ENCODE measurements at regions of chr10 and their contacts with region 1.

Region 1: DNA sequence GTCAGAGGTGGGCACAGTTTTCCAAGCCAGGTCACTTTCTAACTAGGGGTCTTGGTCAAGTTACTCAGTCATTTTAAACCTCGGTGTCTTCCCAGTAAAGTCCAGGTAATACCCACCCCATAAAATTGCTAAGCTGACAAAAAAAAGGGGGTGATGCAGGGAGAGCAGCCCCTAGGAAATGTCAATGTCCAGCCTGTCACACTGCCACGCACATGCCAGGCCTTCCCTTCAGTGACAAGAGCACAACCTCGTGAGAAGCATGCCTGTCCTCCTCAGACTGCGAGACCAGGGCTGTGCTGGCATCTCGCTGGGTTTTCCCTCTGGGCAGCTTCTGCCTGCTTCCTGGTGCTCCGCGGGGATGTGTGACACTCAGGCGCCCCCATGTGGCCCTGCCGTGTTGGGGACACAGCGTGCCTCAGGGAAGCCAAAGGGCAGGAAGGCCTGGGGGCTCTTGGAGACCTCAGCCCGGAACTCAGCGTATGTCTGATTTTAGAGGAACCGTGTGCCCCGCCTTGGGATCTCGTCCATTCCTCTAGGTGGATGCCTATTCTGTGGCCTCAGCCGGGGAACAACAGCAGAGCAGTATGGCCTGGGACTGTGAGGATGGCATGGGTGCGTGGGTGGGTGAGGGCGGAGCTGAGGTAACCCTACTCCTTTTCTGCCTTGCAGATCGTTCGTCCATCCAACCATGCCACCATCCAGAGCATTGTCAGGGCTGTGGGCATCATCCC is 10.2 kb upstream of the GDF2 start:
- DNase-seq: peak; percentile 80
- H3K4me3 ChIP-seq: no peak overlapping the region
- H3K27ac ChIP-seq: no peak overlapping the region
- H3K4me1 ChIP-seq: no peaks in the 10 kb centered on the region
- H3K27me3 ChIP-seq: no peaks in the 10 kb centered on the region
- CTCF ChIP-seq: peak; percentile 86

Region 2: GRCh38 chr10:46266306-46266985 is 1045.7 kb before region 1 on chr10:
- CTCF ChIA-PET with region 1: no interaction called
- POLR2A ChIA-PET with region 1: no interaction called
- intact Hi-C with region 1: no loop called
- DNase-seq: no peak
- H3K4me3 ChIP-seq: no peak overlapping the region
- H3K27ac ChIP-seq: no peak overlapping the region
- H3K4me1 ChIP-seq: no peaks in the 10 kb centered on the region
- H3K27me3 ChIP-seq: no peaks in the 10 kb centered on the region
- CTCF ChIP-seq: no peak

Region 3: DNA sequence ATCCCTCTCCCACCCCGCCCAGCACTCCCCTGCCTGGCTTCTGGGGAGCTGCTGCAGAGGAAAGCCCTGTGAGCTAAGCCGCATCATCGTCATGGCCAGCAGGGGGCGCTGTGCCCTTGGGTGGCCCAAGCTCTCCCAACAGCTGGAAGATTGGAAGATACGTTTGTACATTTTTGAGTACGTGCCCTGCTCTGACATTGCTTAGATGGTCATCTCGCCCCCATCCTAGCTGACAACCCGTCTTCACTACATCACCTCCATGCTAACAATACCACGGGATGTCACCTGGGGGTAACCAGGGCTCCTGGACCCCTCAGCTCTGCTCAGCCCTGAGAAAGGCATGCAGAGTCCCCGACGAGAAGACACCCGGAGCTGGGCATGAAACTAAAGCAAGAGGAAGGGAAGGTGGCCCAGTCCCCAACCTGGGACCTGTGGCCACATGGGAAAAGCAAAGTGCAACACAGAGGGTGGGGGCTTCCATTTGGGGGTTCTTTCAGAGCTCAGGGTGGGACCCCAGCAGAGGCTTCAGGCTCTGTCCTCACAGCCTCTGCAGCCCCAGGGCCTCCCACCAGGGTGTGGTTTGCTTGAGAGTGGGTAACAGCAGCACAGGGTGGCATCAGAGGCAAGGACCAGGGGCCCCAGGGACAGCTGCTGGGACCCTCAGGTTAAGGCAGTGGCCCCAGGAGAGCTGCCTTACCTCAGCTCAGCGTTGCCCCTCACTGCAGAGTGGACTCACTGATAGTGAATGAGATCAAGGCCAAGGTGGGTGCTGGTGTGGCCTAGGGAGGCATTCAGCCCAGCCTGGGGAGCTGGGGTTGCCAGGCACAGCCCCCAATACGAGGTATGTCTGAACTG is 264.2 kb before region 1 on chr10:
- CTCF ChIA-PET with region 1: interaction called, 38 read pairs
- POLR2A ChIA-PET with region 1: no interaction called
- intact Hi-C with region 1: loop called (anchors 1 kb)
- DNase-seq: peak; percentile 76
- H3K4me3 ChIP-seq: no peak overlapping the region
- H3K27ac ChIP-seq: no peak overlapping the region
- H3K4me1 ChIP-seq: no peaks in the 10 kb centered on the region
- H3K27me3 ChIP-seq: no peaks in the 10 kb centered on the region
- CTCF ChIP-seq: peak; percentile 88

Region 4: GRCh38 chr10:47176903-47177868 is 134.9 kb before region 1 on chr10:
- CTCF ChIA-PET with region 1: no interaction called
- POLR2A ChIA-PET with region 1: no interaction called
- intact Hi-C with region 1: no loop called
- DNase-seq: no peak
- H3K4me3 ChIP-seq: no peak overlapping the region
- H3K27ac ChIP-seq: no peak overlapping the region
- H3K4me1 ChIP-seq: peaks cover 11% of the 10 kb centered on the region
- H3K27me3 ChIP-seq: no peaks in the 10 kb centered on the region
- CTCF ChIP-seq: no peak

Region 5: DNA sequence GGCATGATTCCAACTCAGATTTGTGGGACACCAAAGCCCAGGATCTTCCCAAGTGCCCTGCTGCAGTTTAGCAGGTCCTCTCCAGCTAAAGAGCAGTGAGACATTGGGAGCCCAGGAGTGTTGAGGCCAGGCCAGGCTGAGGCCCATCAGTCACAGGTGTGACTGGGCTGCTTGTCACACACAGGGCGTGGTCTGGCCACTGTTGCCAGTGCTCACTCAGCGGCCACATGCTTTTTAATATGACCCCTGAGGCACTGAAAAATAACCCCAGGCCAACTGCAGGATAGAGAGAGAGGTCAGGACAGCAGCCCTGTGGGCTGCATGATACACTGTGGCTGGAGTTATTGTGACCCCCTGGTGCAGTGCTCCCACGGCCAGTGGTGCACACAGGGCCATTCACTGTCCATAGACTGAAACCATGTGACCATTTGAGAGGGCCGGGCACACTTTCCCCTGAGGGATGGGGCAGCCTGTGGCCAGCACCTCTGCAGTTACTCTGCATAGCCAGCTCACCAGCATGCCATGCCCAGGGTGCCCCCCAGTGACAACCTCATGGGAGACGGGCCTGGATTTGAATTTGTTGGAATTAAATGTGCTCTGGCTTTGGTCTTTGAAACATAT is 14.3 kb after region 1 on chr10:
- CTCF ChIA-PET with region 1: no interaction called
- POLR2A ChIA-PET with region 1: no interaction called
- intact Hi-C with region 1: no loop called
- DNase-seq: no peak
- H3K4me3 ChIP-seq: no peak overlapping the region
- H3K27ac ChIP-seq: no peak overlapping the region
- H3K4me1 ChIP-seq: no peaks in the 10 kb centered on the region
- H3K27me3 ChIP-seq: no peaks in the 10 kb centered on the region
- CTCF ChIP-seq: no peak

Region 6: DNA sequence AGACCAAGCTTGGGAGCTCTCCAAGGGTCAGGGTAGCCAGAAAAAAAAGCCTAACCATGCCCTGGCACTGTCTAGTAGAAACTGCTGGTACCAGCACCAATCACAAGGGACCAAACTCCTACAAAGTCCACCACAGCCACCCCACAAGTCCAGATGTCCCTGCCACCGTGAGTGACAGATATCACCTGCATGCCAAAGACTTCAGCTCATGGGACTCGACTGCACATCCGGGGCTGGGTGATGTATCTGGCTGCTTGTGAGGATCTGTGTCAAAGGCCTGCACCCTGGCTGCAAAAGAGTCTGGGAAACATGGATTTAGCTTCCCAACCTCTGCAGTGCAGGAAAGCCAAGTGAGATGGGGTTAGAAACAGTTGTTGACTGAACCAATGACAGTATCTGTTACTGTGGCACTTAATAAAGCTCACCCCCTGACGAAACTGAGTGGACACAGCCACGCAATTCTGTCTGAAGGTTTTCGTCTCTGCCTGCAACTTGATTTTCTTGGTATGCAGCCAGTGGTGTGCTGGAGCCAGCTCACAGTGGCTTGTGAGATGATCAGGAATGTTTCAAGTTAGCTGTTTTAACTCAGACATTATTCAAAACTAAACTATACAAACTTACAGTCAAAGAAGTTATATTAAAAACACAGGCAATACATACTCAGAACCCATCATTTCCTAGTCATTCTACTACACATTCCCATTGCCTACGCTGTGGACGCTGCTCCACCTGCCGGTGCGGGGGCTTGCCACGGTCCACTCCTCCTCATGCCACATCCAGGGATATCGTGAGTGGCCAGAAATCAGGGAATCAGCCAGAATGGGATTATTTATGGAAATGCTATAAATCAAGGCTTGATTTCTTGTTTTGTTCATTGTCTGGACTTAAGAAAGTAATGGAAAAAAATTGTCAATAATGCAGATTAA is 62.8 kb after region 1 on chr10:
- CTCF ChIA-PET with region 1: no interaction called
- POLR2A ChIA-PET with region 1: no interaction called
- intact Hi-C with region 1: loop called (anchors 10 kb)
- DNase-seq: no peak
- H3K4me3 ChIP-seq: no peak overlapping the region
- H3K27ac ChIP-seq: no peak overlapping the region
- H3K4me1 ChIP-seq: no peaks in the 10 kb centered on the region
- H3K27me3 ChIP-seq: peaks cover 37% of the 10 kb centered on the region
- CTCF ChIP-seq: no peak